Endothelial cell of umbilical vein (primary cell): ENCODE measurements at regions of chr3 and their contacts with region 1.

Region 1: DNA sequence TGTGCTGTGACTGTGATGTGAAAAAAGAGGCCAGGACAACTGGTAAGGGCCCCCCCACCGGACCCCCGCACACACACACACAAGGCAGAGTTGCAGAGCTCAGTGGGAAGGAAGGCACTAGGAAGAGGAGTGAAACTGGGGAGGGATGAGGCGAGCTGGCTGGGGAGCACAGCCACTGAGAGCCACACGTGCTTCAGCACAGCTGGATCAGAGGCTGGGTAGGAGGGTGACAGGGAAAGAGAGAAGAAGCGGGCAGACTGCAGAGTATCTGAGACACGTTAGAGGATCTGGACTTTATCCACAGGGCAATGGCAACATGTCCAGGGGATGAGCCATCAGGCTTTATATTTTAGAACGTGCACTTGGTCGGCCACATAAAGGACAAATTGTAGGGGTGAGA is 38.0 kb upstream of the TKT start:
- DNase-seq: no peak
- H3K4me3 ChIP-seq: no peak overlapping the region
- H3K27ac ChIP-seq: no peak overlapping the region
- H3K4me1 ChIP-seq: no peaks in the 10 kb centered on the region
- H3K27me3 ChIP-seq: no peaks in the 10 kb centered on the region
- CTCF ChIP-seq: no peak
- POLR2A ChIP-seq: no peak

Region 2: DNA sequence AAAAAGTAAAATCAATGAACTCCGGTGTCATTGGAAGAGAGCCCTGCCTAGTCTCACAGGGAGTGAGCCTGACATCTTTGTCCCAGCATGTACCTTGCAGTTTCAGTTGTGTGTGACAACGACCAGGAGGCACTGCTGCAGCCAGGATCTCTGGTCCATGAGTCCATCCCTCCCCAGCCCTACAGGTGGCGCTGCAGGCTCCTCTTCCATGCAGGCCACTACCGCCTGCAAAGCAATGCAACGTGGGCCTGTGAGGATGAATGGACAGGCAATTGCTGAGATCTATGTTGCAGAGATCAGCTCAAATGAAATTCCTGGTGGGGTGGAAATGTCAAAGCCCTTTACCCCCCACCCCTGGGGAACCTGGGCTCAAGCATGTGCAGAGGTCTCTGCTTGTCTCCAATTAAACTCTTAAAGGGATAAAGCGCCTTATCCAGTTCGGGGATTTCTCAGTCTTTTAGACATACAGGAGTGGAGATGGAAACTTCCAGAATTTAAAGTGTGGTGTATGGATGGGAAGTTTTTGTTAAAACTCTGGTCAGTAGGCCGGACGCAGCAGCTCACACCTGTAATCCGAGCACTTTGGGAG is 73.9 kb before region 1 on chr3:
- CTCF ChIA-PET with region 1: interaction called, 3 read pairs
- POLR2A ChIA-PET with region 1: no interaction called
- dilution Hi-C with region 1: no loop called
- intact Hi-C with region 1: loop called (anchors 5 kb)
- DNase-seq: peak; percentile 81
- H3K4me3 ChIP-seq: no peak overlapping the region
- H3K27ac ChIP-seq: no peak overlapping the region
- H3K4me1 ChIP-seq: no peaks in the 10 kb centered on the region
- H3K27me3 ChIP-seq: no peaks in the 10 kb centered on the region
- CTCF ChIP-seq: peak; percentile 94 to 95
- POLR2A ChIP-seq: no peak

Region 3: DNA sequence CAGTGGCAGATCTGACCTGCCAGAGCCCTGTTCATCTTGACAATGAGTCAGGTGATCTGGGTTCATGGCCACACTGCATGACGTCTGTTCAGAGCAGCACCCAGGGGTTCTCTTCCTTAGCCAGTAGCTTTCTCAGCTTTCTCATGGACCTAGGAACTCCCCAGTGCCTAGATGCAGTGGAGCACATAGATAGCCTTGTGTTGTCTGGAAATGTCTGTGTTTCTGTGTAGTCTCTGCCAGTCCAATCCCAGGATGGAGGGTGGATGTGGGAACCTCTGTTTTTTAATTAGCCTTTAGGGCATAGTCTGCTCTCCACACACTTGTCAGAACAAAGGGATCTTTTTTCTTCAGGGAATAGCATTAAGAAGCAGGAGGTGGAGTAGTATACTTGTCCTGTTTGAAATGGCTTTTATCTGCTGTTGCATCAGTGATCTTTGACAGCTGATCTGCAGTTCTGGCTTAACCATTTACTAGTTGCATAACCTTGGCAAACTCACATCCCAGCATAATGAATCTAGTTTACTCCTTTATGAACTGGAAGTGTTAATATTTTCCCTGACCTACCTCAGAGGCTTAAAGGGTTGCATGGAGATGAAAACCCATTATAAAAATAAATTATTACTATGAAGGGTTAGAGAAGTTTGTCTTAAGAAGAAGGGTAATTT is 184.4 kb after region 1 on chr3:
- CTCF ChIA-PET with region 1: no interaction called
- POLR2A ChIA-PET with region 1: no interaction called
- dilution Hi-C with region 1: no loop called
- intact Hi-C with region 1: no loop called
- DNase-seq: no peak
- H3K4me3 ChIP-seq: no peak overlapping the region
- H3K27ac ChIP-seq: no peak overlapping the region
- H3K4me1 ChIP-seq: no peaks in the 10 kb centered on the region
- H3K27me3 ChIP-seq: peaks cover 0 to 6% of the 10 kb centered on the region in 2 experiments
- CTCF ChIP-seq: no peak
- POLR2A ChIP-seq: no peak

Region 4: GRCh38 chr3:53495520-53496391 is 201.9 kb after region 1 on chr3:
- CTCF ChIA-PET with region 1: no interaction called
- POLR2A ChIA-PET with region 1: no interaction called
- dilution Hi-C with region 1: no loop called
- intact Hi-C with region 1: loop called (anchors 5 kb)
- DNase-seq: no peak
- H3K4me3 ChIP-seq: no peak overlapping the region
- H3K27ac ChIP-seq: no peak overlapping the region
- H3K4me1 ChIP-seq: peaks cover 4% of the 10 kb centered on the region
- H3K27me3 ChIP-seq: peaks cover 47 to 52% of the 10 kb centered on the region in 2 experiments
- CTCF ChIP-seq: no peak
- POLR2A ChIP-seq: no peak

Region 5: DNA sequence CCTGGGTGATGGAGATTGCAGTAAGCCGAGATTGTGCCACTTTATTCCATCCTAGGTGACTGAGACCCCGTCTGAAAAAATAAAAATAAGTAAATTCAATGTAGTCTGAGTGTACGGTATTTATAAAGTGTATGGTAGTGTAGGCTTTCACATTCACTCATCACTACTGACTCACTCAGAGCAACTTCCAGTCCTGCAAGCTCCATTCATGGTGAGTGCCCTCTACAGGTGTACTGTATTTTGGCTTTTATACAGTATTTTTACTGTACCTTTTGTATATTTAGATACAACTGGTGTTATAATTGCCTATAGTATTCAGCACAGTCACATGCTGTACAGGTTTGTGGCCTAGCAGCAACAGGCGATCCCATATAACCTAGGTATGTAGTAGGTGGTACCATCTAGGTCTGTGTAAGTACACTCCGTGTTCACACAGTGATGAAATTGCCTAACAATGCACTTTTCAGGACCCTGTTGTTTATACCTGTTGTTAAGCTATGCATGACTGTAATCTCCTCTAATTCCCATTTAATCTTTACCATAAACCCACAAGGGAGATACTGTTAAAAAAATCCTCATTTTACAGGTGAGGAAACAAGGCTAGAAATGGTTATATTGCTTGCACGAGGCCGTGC is 219.8 kb after region 1 on chr3:
- CTCF ChIA-PET with region 1: no interaction called
- POLR2A ChIA-PET with region 1: no interaction called
- dilution Hi-C with region 1: no loop called
- intact Hi-C with region 1: loop called (anchors 5 kb)
- DNase-seq: no peak
- H3K4me3 ChIP-seq: no peak overlapping the region
- H3K27ac ChIP-seq: no peak overlapping the region
- H3K4me1 ChIP-seq: no peaks in the 10 kb centered on the region
- H3K27me3 ChIP-seq: peaks cover 0 to 5% of the 10 kb centered on the region in 2 experiments
- CTCF ChIP-seq: peak in 1 of 2 donors; percentile 4
- POLR2A ChIP-seq: no peak